ENCODE measurements at regions of chrX and their contacts with region 1.

Region 1: GRCh38 chrX:82648052-82648451 is 860.0 kb upstream of the POU3F4 start:
- DNase-seq: no peak
- ATAC-seq: peak; percentile 27; the same call in 1 of the 2 replicates
- H3K4me3 ChIP-seq: no peak overlapping the region
- H3K27ac ChIP-seq: no peak overlapping the region
- H3K4me1 ChIP-seq: no peaks in the 10 kb centered on the region
- H3K27me3 ChIP-seq: no peaks in the 10 kb centered on the region
- CTCF ChIP-seq: peak in 2 of 3 experiments; percentile 6 to 28; a peak in 2 of 6 replicates
- POLR2A ChIP-seq: no peak
- RAD21 ChIP-seq: peak; percentile 38; the same call in 1 of the 2 replicates

Region 2: DNA sequence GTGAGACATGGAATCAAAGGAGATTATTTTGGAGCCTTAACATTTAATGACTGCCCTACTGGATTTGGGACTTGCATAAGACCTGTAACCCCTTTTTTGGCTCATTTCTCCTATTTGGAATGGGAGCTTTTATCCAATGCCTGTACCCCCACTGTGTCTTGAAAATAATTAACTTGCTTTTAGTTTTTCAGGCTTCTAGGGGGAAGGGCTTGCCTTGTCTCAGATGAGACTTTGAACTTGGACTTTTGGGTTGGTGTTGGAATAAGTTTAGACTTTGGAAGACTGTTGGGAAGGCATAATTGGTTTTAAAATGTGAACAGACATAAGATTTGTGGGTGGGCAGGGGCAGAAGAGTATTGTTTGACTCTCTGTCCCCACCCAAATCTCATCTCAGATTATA is 671.0 kb after region 1 on chrX:
- CTCF ChIA-PET with region 1: no interaction called
- POLR2A ChIA-PET with region 1: no interaction called
- RAD21 ChIA-PET with region 1: no interaction called
- intact Hi-C with region 1: loop called (anchors 5 kb)
- DNase-seq: no peak
- ATAC-seq: no peak
- H3K4me3 ChIP-seq: no peak overlapping the region
- H3K27ac ChIP-seq: no peak overlapping the region
- H3K4me1 ChIP-seq: no peaks in the 10 kb centered on the region
- H3K27me3 ChIP-seq: no peaks in the 10 kb centered on the region
- CTCF ChIP-seq: no peak
- POLR2A ChIP-seq: no peak
- RAD21 ChIP-seq: no peak